ENCODE measurements at regions of chr18 and their contacts with region 1.

Region 1: GRCh38 chr18:22563098-22563707 is 145.5 kb upstream of the CTAGE1 start:
- DNase-seq: peak; percentile 45 to 47
- H3K4me3 ChIP-seq: no peak overlapping the region
- H3K27ac ChIP-seq: no peak overlapping the region
- H3K4me1 ChIP-seq: peaks cover 0 to 12% of the 10 kb centered on the region in 2 donors
- H3K27me3 ChIP-seq: no peaks in the 10 kb centered on the region
- CTCF ChIP-seq: peak; percentile 35 to 97 (median 82)
- POLR2A ChIP-seq: no peak

Region 2: GRCh38 chr18:22170421-22171262 is 392.6 kb before region 1 on chr18:
- intact Hi-C with region 1: loop called (anchors 5 kb)
- DNase-seq: peak; percentile 60 to 67
- H3K4me3 ChIP-seq: peak overlapping the region; percentile 74 to 99 (median 87)
- H3K27ac ChIP-seq: peak overlapping the region; percentile 87 to 97 (median 95)
- H3K4me1 ChIP-seq: peaks cover 17 to 31% of the 10 kb centered on the region in 2 donors
- H3K27me3 ChIP-seq: peaks cover 28% of the 10 kb centered on the region
- CTCF ChIP-seq: no peak
- POLR2A ChIP-seq: no peak

Region 3: DNA sequence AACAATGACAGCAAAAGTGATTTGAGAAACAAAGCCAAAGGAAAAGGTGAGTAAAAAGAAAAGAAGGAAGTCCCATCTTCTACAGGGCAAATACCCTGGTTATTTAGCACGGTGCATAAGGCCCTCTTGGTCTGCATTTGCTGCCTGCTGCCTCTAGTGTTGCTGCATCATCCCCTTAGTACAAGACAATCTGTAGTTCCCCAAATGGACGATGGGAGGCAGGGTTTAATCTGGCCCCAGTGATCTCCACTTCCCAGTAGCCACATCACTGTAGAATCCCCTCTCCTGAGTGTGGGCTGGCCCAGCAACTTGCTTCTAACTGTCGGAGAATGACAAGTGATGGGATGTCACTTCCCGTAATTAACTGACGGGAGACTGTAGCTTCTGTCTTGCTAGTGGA is 230.6 kb before region 1 on chr18:
- intact Hi-C with region 1: loop called (anchors 10 kb)
- DNase-seq: no peak
- H3K4me3 ChIP-seq: no peak overlapping the region
- H3K27ac ChIP-seq: no peak overlapping the region
- H3K4me1 ChIP-seq: peaks cover 0 to 2% of the 10 kb centered on the region in 2 donors
- H3K27me3 ChIP-seq: no peaks in the 10 kb centered on the region
- CTCF ChIP-seq: peak in 1 of 6 experiments; percentile 14
- POLR2A ChIP-seq: no peak

Region 4: GRCh38 chr18:22451796-22452195 is 111.4 kb before region 1 on chr18:
- intact Hi-C with region 1: loop called (anchors 10 kb)
- DNase-seq: no peak
- H3K4me3 ChIP-seq: no peak overlapping the region
- H3K27ac ChIP-seq: no peak overlapping the region
- H3K4me1 ChIP-seq: peaks cover 5 to 7% of the 10 kb centered on the region in 2 donors
- H3K27me3 ChIP-seq: no peaks in the 10 kb centered on the region
- CTCF ChIP-seq: no peak
- POLR2A ChIP-seq: no peak

Region 5: DNA sequence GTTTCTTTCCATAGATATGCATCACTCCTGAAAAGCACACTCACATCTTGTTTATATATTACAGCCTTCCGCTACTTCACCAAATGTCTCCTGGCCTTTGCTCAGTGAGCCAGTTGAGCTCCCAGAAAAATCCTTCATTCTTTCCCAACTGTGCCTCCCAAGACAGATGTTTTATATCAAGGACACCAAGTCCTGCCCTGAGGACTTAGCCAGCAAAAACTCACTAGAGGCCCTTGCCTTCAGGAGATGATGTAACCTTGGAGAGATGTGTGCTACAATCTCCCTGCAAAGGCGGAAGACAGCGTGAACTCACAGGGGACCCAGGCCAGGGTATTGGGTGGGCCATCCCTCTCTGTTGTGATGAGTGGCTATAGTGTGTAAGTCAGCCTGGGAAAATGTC is 59.4 kb before region 1 on chr18:
- intact Hi-C with region 1: loop called (anchors 10 kb)
- DNase-seq: no peak
- H3K4me3 ChIP-seq: no peak overlapping the region
- H3K27ac ChIP-seq: no peak overlapping the region
- H3K4me1 ChIP-seq: peaks cover 4 to 5% of the 10 kb centered on the region in 2 donors
- H3K27me3 ChIP-seq: no peaks in the 10 kb centered on the region
- CTCF ChIP-seq: no peak
- POLR2A ChIP-seq: no peak

Measured in thyroid gland (tissue), 4 donors.